ENCODE measurements at regions of chr20 and their contacts with region 1.

Region 1: GRCh38 chr20:20664795-20665589 is 47.5 kb downstream of the RALGAPA2 start:
- DNase-seq: peak; percentile 23
- CTCF ChIP-seq: peak; percentile 42

Region 2: DNA sequence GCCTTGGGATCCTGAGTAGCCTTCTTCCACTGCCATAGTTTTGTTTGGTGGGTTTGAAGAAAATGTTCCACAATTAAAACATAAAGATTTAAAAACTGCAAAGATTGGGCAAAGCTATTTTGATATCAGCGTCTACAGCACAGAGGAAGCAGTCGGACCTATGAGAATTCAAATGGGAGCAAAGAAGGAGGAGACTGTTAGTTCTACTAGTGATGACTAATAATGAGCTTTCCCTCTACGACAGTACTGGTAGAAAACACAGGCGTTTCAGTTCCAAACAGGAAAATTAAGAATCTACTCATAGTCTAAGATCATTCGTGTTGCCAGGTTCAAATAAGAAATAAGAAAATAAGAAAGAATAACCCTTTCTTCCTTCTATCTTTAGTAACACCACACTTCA is 175.9 kb before region 1 on chr20:
- in situ Hi-C with region 1: no loop called
- DNase-seq: peak; percentile 31
- CTCF ChIP-seq: no peak

Region 3: GRCh38 chr20:20824924-20825584 is 160.1 kb after region 1 on chr20:
- in situ Hi-C with region 1: loop called (anchors 10 kb)
- DNase-seq: peak; percentile 83
- CTCF ChIP-seq: peak; percentile 71